Motor neuron (in vitro differentiated cells): ENCODE measurements at regions of chr3 and their contacts with region 1.

Region 1: DNA sequence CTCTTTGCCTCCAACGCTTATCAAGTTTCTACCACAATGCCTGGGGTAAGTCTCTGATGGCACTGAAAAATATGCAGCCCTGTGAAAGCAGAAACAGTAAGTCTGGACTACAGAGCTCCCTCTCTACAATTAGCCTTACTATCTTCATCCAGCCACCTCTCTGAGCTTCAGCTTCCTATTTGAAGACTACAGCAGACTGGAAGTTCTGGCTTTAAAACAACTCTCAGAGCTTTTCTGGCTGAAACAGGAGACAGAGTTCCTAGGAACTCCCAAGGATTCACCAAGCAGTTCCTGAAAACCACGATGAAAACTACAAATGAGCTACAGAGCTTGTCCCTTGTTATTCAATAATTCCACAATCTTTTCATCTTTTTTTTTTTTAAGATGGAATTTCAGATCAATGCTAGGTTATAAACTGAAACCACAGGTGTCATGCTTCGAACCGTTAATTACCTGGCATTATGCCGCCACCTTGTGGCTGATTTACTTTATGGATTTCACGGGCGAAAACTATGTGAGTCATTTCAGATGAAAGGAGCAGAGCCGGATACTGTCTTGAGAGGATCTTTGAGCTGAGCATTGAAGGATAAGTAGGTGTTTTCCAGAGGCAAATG is 3.9 kb downstream of the CRYGS start:
- ATAC-seq: peak; percentile 73 to 95 (median 82)
- H3K4me3 ChIP-seq: peak overlapping the region in 1 of 5 donors; percentile 6
- H3K27ac ChIP-seq: no peak overlapping the region
- H3K4me1 ChIP-seq: no peaks in the 10 kb centered on the region

Region 2: GRCh38 chr3:185878920-185879319 is 661.4 kb before region 1 on chr3:
- in situ Hi-C with region 1: no loop called
- ATAC-seq: no peak
- H3K4me3 ChIP-seq: no peak overlapping the region
- H3K27ac ChIP-seq: no peak overlapping the region
- H3K4me1 ChIP-seq: no peaks in the 10 kb centered on the region

Region 3: GRCh38 chr3:186259612-186260383 is 280.5 kb before region 1 on chr3:
- in situ Hi-C with region 1: loop called in 4 of 9 experiments (anchors 10 to 25 kb)
- ATAC-seq: peak; percentile 93 to 100 (median 100)
- H3K4me3 ChIP-seq: no peak overlapping the region
- H3K27ac ChIP-seq: no peak overlapping the region
- H3K4me1 ChIP-seq: peaks cover 0 to 6% of the 10 kb centered on the region in 2 donors